ENCODE measurements at regions of chr2 and their contacts with region 1.

Region 1: GRCh38 chr2:27209621-27210401 is 2.0 kb upstream of the ATRAID start:
- DNase-seq: no peak
- H3K4me3 ChIP-seq: no peak overlapping the region
- H3K27ac ChIP-seq: no peak overlapping the region
- H3K4me1 ChIP-seq: no peaks in the 10 kb centered on the region
- H3K27me3 ChIP-seq: no peaks in the 10 kb centered on the region
- CTCF ChIP-seq: no peak
- POLR2A ChIP-seq: no peak

Region 2: GRCh38 chr2:26327291-26328272 is 882.2 kb before region 1 on chr2:
- intact Hi-C with region 1: no loop called
- DNase-seq: no peak
- H3K4me3 ChIP-seq: no peak overlapping the region
- H3K27ac ChIP-seq: no peak overlapping the region
- H3K4me1 ChIP-seq: no peaks in the 10 kb centered on the region
- H3K27me3 ChIP-seq: no peaks in the 10 kb centered on the region
- CTCF ChIP-seq: no peak
- POLR2A ChIP-seq: no peak

Region 3: GRCh38 chr2:27123302-27124231 is 86.2 kb before region 1 on chr2 and contains the start of gene ABHD1:
- intact Hi-C with region 1: loop called (anchors 5 kb)
- DNase-seq: peak; percentile 61
- H3K4me3 ChIP-seq: peak within 1 kb of the TSS; percentile 45 to 54
- H3K27ac ChIP-seq: no peak within 1 kb of the TSS
- H3K4me1 ChIP-seq: no peaks in the 10 kb centered on the region
- H3K27me3 ChIP-seq: no peaks in the 10 kb centered on the region
- CTCF ChIP-seq: no peak
- POLR2A ChIP-seq: no peak
- total RNA-seq, gene ABHD1: 4.1 to 7.0 TPM

Region 4: DNA sequence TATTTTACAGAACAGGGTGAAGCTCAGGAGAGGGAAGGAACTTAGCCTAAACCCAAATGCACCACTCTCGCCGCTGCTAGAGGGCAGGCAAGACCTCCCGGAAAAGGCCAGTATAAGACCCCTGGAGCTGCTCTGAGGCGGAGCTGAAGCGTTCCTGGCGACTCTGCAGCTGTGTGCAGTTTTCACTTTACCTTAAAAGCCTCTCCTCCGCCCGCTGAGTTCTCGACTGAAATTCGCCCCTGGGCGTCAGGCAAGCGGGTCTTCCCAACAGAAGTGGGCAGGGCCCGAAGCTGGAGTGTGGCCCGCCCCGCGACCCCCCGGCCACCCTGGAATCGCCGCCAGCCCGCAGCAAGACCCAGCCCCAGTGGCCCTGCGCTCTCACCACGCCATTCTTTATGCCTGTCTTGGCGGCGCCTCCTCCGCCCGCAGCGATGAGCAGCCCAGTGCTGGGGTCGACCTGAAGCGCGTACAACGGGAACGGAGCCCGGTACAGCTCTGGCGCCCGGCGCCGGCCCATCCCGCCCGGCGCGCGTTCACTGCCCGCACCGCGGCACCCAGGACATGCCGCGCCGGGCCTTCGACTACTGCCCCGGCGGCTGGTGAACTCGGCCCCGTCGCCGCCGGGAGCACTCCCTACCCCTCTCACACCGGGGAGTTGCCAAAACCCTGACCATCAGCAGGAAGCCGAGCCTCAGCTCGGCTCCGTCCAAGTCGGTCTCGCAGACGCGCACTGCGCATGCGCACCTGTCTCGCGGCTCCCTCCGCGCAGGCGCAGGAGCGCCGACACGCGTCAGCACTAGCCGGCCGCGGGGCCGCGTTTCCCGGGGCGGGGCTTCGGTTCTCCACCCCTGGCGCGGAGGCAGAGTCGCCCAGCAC is 75.7 kb before region 1 on chr2 and contains the start of gene PREB:
- intact Hi-C with region 1: no loop called
- DNase-seq: peak; percentile 93
- H3K4me3 ChIP-seq: peak within 1 kb of the TSS; percentile 78 to 96
- H3K27ac ChIP-seq: peak within 1 kb of the TSS; percentile 82 to 88
- H3K4me1 ChIP-seq: peaks cover 8% of the 10 kb centered on the region
- H3K27me3 ChIP-seq: no peaks in the 10 kb centered on the region
- CTCF ChIP-seq: peak in 2 of 4 experiments; percentile 2 to 36
- POLR2A ChIP-seq: peak; percentile 81
- total RNA-seq, gene PREB: 74.0 to 88.9 TPM